ENCODE measurements at regions of chr11 and their contacts with region 1.

Region 1: DNA sequence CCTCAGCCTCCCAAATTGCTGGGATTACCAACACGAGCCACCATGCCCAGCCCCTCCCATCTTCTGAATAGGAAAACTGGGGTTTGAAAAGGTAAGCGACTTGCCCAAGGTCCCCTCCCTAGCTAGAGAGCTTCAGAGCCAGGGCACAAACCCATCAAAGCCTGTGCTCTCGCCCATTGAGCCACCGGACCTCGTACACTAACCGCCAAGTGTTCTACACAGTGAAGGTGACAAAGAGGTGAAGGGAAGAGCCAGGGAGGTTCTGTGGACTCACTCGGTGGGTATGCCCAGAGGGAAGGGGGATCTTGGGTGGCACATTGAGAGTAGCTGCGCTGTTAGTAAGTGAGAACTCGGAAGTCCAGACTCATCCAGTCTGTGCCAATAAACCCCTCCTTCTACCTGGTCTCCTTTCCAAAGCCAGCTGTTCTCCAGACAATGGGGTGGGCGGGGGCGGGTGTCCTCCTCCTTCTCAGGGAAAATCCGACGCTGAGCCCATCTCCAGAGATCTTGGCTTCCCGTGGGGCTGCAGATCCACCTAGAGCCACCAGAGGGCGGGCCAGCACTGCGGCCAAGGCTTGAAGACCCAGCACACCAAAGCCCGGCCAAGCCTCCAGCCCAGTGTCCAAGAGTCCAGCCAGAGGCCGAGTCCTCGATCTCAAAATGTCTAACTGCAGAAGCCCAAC is 3.2 kb upstream of the RTN4RL2 start:
- DNase-seq: peak; percentile 82
- ATAC-seq: peak; percentile 57
- H3K4me3 Mint-ChIP-seq: no peak overlapping the region
- H3K27ac Mint-ChIP-seq: no peak overlapping the region
- H3K4me1 Mint-ChIP-seq: peaks cover 24% of the 10 kb centered on the region
- H3K27me3 Mint-ChIP-seq: peaks cover 44% of the 10 kb centered on the region

Region 2: GRCh38 chr11:56923116-56923515 is 534.0 kb before region 1 on chr11:
- CTCF ChIA-PET with region 1: no interaction called
- DNase-seq: no peak
- ATAC-seq: no peak
- H3K4me3 Mint-ChIP-seq: no peak overlapping the region
- H3K27ac Mint-ChIP-seq: no peak overlapping the region
- H3K4me1 Mint-ChIP-seq: no peaks in the 10 kb centered on the region
- H3K27me3 Mint-ChIP-seq: no peaks in the 10 kb centered on the region

Region 3: GRCh38 chr11:57015679-57016078 is 441.4 kb before region 1 on chr11:
- CTCF ChIA-PET with region 1: no interaction called
- DNase-seq: no peak
- ATAC-seq: no peak
- H3K4me3 Mint-ChIP-seq: no peak overlapping the region
- H3K27ac Mint-ChIP-seq: no peak overlapping the region
- H3K4me1 Mint-ChIP-seq: no peaks in the 10 kb centered on the region
- H3K27me3 Mint-ChIP-seq: no peaks in the 10 kb centered on the region

Region 4: GRCh38 chr11:57345555-57346211 is 111.4 kb before region 1 on chr11:
- CTCF ChIA-PET with region 1: interaction called, 22 read pairs
- DNase-seq: peak; percentile 71
- ATAC-seq: peak; percentile 65
- H3K4me3 Mint-ChIP-seq: no peak overlapping the region
- H3K27ac Mint-ChIP-seq: no peak overlapping the region
- H3K4me1 Mint-ChIP-seq: peaks cover 3% of the 10 kb centered on the region
- H3K27me3 Mint-ChIP-seq: no peaks in the 10 kb centered on the region

Region 5: DNA sequence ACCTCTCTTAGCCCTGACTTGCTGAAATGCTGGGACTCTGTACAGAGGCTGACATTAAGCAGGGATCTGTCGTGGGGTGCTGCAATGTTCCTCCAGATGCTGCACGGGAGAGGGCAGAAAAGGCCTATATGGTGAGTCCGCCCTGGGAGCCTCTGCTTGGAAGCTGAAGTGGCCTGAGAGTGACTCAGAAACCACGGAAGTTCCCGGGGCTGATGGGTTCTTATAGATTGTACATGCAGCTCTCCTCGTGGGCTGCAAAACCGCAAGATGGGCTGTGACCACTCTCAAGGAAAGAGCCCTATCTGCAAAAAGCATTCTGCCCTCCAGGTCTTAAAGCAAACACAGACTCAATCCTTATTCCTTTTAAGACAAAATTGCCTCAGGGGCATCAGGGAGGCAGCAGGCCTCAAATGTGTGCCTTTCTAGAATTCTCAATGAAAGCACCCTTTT is 24.4 kb before region 1 on chr11:
- CTCF ChIA-PET with region 1: interaction called, 20 read pairs
- DNase-seq: peak; percentile 62
- ATAC-seq: peak; percentile 70
- H3K4me3 Mint-ChIP-seq: no peak overlapping the region
- H3K27ac Mint-ChIP-seq: no peak overlapping the region
- H3K4me1 Mint-ChIP-seq: peaks cover 15% of the 10 kb centered on the region
- H3K27me3 Mint-ChIP-seq: peaks cover 12% of the 10 kb centered on the region

Region 6: DNA sequence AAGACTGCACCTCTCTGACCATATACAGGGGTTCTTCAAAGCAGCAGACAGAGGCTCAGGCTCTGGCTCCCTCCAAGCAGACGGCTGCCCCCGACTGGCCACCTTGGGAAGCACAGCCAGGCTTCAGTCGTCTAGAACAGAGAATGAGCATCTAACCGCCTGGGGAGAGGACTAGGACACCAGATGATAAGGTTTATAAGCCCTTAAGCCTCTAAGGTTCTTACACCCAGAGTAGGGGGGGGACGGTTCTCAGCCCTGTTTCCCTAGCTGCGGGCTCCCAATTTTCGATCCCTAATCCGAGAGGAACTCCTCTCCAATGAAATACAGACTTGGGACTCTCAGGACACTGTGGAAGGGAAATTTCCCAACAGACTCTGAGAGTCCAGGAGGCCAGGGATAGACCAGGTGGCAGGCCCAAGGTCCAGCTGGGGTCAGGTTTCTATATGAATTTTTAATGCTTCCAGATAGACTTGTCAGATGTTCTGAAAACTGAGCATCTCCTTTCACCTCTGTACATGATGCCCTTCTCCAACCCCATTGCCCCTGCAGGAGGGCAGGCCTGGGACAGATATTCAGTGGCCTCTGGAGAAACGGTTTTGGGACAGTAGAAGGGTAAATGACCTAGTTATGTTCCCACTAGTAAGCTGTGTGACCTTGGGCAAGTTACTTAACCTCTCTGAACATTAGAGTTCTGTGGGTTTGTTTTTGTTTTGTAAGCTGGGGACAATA is 23.5 kb after region 1 on chr11:
- CTCF ChIA-PET with region 1: interaction called, 102 read pairs
- DNase-seq: peak; percentile 86
- ATAC-seq: peak; percentile 70
- H3K4me3 Mint-ChIP-seq: no peak overlapping the region
- H3K27ac Mint-ChIP-seq: no peak overlapping the region
- H3K4me1 Mint-ChIP-seq: peaks cover 15% of the 10 kb centered on the region
- H3K27me3 Mint-ChIP-seq: peaks cover 49% of the 10 kb centered on the region

Region 7: GRCh38 chr11:57530596-57531507 is 73.8 kb after region 1 on chr11 and contains the start of gene TIMM10:
- CTCF ChIA-PET with region 1: interaction called, 178 read pairs
- DNase-seq: peak; percentile 97
- ATAC-seq: peak; percentile 97
- H3K4me3 Mint-ChIP-seq: peak within 1 kb of the TSS; percentile 77
- H3K27ac Mint-ChIP-seq: peak within 1 kb of the TSS; percentile 79
- H3K4me1 Mint-ChIP-seq: peaks cover 41% of the 10 kb centered on the region
- H3K27me3 Mint-ChIP-seq: no peaks in the 10 kb centered on the region
- total RNA-seq, gene TIMM10: 74.5 to 92.9 TPM